CD4-positive, alpha-beta T cell (primary cell): ENCODE measurements at regions of chr14 and their contacts with region 1.

Region 1: GRCh38 chr14:97718886-97719442 is 921.8 kb downstream of the VRK1 start:
- DNase-seq: no peak
- ATAC-seq: no peak
- H3K4me3 ChIP-seq: no peak overlapping the region
- H3K4me3 Mint-ChIP-seq: peak overlapping the region; percentile 4
- H3K27ac ChIP-seq: peak overlapping the region; percentile 18 to 23
- H3K27ac Mint-ChIP-seq: peak overlapping the region; percentile 94
- H3K4me1 ChIP-seq: peaks cover 30% of the 10 kb centered on the region
- H3K4me1 Mint-ChIP-seq: peaks cover 57% of the 10 kb centered on the region
- H3K27me3 ChIP-seq: no peaks in the 10 kb centered on the region
- H3K27me3 Mint-ChIP-seq: no peaks in the 10 kb centered on the region
- CTCF ChIP-seq: no peak

Region 2: GRCh38 chr14:97699026-97699425 is 19.9 kb before region 1 on chr14:
- CTCF ChIA-PET with region 1: no interaction called
- POLR2A ChIA-PET with region 1: interaction called, 3 read pairs
- intact Hi-C with region 1: loop called in 1 of 2 experiments (anchors 1 kb)
- DNase-seq: no peak
- ATAC-seq: no peak
- H3K4me3 ChIP-seq: no peak overlapping the region
- H3K4me3 Mint-ChIP-seq: no peak overlapping the region
- H3K27ac ChIP-seq: no peak overlapping the region
- H3K27ac Mint-ChIP-seq: peak overlapping the region; percentile 17
- H3K4me1 ChIP-seq: peaks cover 40% of the 10 kb centered on the region
- H3K4me1 Mint-ChIP-seq: peaks cover 72% of the 10 kb centered on the region
- H3K27me3 ChIP-seq: no peaks in the 10 kb centered on the region
- H3K27me3 Mint-ChIP-seq: no peaks in the 10 kb centered on the region
- CTCF ChIP-seq: no peak

Region 3: GRCh38 chr14:98323836-98324235 is 604.9 kb after region 1 on chr14:
- CTCF ChIA-PET with region 1: no interaction called
- POLR2A ChIA-PET with region 1: no interaction called
- intact Hi-C with region 1: no loop called
- DNase-seq: no peak
- ATAC-seq: no peak
- H3K4me3 ChIP-seq: no peak overlapping the region
- H3K4me3 Mint-ChIP-seq: no peak overlapping the region
- H3K27ac ChIP-seq: no peak overlapping the region
- H3K27ac Mint-ChIP-seq: no peak overlapping the region
- H3K4me1 ChIP-seq: peaks cover 3% of the 10 kb centered on the region
- H3K4me1 Mint-ChIP-seq: peaks cover 24% of the 10 kb centered on the region
- H3K27me3 ChIP-seq: no peaks in the 10 kb centered on the region
- H3K27me3 Mint-ChIP-seq: no peaks in the 10 kb centered on the region
- CTCF ChIP-seq: no peak